Activated CD4-positive, alpha-beta T cell treated with anti-CD3 and anti-CD28 coated beads for 36 hours (primary cell): ENCODE measurements at regions of chr20 and their contacts with region 1.

Region 1: DNA sequence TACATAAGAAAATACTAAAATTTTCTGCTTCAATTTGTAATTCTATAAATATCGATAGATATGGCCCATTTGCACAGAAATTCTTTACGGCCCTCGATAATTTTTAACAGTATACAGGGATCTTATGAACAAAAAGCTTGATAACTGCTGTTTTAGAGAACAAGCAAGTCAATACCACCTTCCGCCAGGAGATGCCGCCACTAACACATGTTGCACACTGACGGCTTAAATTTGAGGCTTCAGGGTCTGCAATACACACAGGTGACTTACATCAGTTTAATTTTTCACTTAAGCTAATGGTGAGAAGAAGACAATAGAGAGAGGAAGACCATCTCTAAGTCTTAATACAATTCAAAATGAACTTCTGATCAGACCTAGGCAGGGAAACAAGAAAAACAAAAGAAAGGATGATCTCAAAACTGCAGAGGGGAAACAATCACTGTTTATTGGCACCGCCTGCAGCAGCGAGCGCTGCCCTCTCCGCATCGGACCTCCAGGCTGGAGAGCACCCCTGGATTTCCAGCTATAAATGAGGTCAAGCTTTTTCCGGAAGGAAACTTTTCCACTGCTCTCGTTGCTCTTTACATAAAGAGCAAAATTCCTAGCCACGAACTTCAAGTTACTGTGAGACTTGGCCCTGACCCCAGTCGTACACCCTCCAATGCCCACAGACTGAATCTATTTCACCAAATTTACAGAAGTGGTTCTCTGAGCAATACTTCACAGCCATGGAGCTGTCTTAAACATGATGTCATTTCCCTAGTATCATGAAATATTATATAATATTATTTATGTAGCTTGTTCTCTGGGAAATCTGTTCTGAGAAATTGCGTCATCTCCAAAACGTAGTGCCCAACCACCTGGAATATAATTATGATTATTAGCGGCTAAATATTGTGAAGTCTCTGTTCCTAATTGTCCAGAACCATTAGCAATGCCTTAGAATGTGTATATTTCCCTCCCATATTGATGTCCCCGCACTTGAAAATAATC is 54.1 kb downstream of the OTOR start:
- DNase-seq: peak; percentile 79
- ATAC-seq: no peak
- H3K4me3 Mint-ChIP-seq: no peak overlapping the region
- H3K27ac Mint-ChIP-seq: no peak overlapping the region
- H3K4me1 Mint-ChIP-seq: no peaks in the 10 kb centered on the region
- H3K27me3 Mint-ChIP-seq: peaks cover 43% of the 10 kb centered on the region

Region 2: GRCh38 chr20:16821211-16822089 is 19.2 kb after region 1 on chr20:
- CTCF ChIA-PET with region 1: interaction called, 59 read pairs
- POLR2A ChIA-PET with region 1: no interaction called
- intact Hi-C with region 1: loop called in 1 of 2 experiments (anchors 1 kb)
- DNase-seq: peak; percentile 45
- ATAC-seq: peak; percentile 57
- H3K4me3 Mint-ChIP-seq: no peak overlapping the region
- H3K27ac Mint-ChIP-seq: no peak overlapping the region
- H3K4me1 Mint-ChIP-seq: no peaks in the 10 kb centered on the region
- H3K27me3 Mint-ChIP-seq: peaks cover 14% of the 10 kb centered on the region

Region 3: GRCh38 chr20:17281478-17281877 is 479.3 kb after region 1 on chr20:
- CTCF ChIA-PET with region 1: no interaction called
- POLR2A ChIA-PET with region 1: no interaction called
- intact Hi-C with region 1: loop called in 1 of 2 experiments (anchors 1 kb)
- DNase-seq: peak; percentile 46
- ATAC-seq: no peak
- H3K4me3 Mint-ChIP-seq: no peak overlapping the region
- H3K27ac Mint-ChIP-seq: no peak overlapping the region
- H3K4me1 Mint-ChIP-seq: no peaks in the 10 kb centered on the region
- H3K27me3 Mint-ChIP-seq: no peaks in the 10 kb centered on the region

Region 4: GRCh38 chr20:17431621-17432364 is 629.6 kb after region 1 on chr20:
- CTCF ChIA-PET with region 1: interaction called, 35 read pairs
- POLR2A ChIA-PET with region 1: no interaction called
- intact Hi-C with region 1: loop called (anchors 1 kb)
- DNase-seq: peak; percentile 72
- ATAC-seq: no peak
- H3K4me3 Mint-ChIP-seq: no peak overlapping the region
- H3K27ac Mint-ChIP-seq: no peak overlapping the region
- H3K4me1 Mint-ChIP-seq: no peaks in the 10 kb centered on the region
- H3K27me3 Mint-ChIP-seq: peaks cover 11% of the 10 kb centered on the region

Region 5: GRCh38 chr20:17654649-17655285 is 852.6 kb after region 1 on chr20:
- CTCF ChIA-PET with region 1: no interaction called
- POLR2A ChIA-PET with region 1: no interaction called
- intact Hi-C with region 1: loop called in 1 of 2 experiments (anchors 10 kb)
- DNase-seq: peak; percentile 33
- ATAC-seq: no peak
- H3K4me3 Mint-ChIP-seq: no peak overlapping the region
- H3K27ac Mint-ChIP-seq: no peak overlapping the region
- H3K4me1 Mint-ChIP-seq: peaks cover 5% of the 10 kb centered on the region
- H3K27me3 Mint-ChIP-seq: no peaks in the 10 kb centered on the region

Region 6: DNA sequence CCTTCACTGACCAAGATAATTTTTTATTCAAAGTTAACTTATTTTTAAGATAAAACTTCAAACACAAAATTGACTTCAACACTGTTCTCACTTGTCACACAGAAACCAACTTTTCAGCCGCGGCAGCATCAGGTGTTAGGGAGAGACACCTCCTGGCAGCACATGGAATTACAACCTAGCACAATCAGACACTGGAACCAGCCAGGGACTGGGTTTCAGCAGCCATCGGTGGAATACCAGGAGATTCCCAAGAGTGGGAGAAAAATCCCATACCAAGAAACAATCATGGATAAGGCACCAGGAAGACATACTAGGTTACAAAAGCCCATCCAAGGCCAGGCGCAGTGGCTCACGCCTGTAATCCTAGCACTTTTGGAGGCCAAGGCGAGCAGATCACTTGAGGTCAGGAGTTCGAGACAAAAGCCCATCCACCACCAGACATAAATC is 1096.4 kb after region 1 on chr20:
- CTCF ChIA-PET with region 1: no interaction called
- POLR2A ChIA-PET with region 1: no interaction called
- intact Hi-C with region 1: loop called in 1 of 2 experiments (anchors 5 kb)
- DNase-seq: peak; percentile 80
- ATAC-seq: peak; percentile 47
- H3K4me3 Mint-ChIP-seq: no peak overlapping the region
- H3K27ac Mint-ChIP-seq: no peak overlapping the region
- H3K4me1 Mint-ChIP-seq: peaks cover 17% of the 10 kb centered on the region
- H3K27me3 Mint-ChIP-seq: peaks cover 27% of the 10 kb centered on the region